ENCODE measurements at regions of chr14 and their contacts with region 1.

Region 1: DNA sequence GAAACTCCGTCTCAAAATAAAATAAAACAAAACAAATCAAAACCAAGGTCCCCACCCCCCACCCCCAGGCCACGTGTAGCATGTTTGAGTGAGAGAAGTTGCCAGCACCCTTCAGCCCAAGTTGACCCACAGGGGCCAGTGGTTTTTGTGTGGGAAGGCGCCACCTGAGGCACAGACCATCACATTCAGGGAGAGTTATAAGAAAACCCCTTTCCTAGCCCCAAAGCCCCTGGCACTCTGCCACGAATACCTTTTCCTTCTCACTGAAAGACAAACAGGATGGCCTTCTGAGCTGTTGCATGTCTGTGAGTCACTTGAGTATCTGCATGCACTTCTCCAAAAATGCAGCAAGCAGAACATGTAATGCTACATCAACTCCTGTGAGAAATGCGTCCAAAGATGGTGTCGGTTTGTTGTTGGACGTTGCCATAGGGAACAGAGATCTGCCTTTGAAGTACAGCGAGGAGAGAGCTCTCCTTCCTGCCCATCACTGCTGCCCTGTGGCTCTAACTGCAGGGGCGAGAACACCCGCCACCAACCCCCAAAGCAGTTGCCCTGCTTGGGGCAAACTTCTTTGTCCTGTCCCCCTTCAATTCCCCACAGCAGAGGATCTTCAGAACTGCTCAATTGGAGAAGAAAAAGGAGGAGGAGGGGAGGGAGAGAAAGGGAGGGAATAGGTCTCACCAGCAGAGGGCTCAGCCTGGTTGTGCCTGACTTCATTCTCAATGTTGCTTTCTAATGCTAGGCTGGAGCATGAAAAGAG is 2.7 kb upstream of the TRAF3 start:
- DNase-seq: no peak
- H3K4me3 ChIP-seq: no peak overlapping the region
- H3K27ac ChIP-seq: peak overlapping the region in 3 of 4 donors; percentile 46 to 82 (median 81)
- H3K4me1 ChIP-seq: peaks cover 0 to 31% (median 11%) of the 10 kb centered on the region in 4 donors
- H3K27me3 ChIP-seq: peaks cover 0 to 7% (median 0%) of the 10 kb centered on the region in 3 donors
- CTCF ChIP-seq: peak; percentile 44 to 78 (median 68)
- EP300 ChIP-seq: no peak
- POLR2A ChIP-seq: no peak

Region 2: DNA sequence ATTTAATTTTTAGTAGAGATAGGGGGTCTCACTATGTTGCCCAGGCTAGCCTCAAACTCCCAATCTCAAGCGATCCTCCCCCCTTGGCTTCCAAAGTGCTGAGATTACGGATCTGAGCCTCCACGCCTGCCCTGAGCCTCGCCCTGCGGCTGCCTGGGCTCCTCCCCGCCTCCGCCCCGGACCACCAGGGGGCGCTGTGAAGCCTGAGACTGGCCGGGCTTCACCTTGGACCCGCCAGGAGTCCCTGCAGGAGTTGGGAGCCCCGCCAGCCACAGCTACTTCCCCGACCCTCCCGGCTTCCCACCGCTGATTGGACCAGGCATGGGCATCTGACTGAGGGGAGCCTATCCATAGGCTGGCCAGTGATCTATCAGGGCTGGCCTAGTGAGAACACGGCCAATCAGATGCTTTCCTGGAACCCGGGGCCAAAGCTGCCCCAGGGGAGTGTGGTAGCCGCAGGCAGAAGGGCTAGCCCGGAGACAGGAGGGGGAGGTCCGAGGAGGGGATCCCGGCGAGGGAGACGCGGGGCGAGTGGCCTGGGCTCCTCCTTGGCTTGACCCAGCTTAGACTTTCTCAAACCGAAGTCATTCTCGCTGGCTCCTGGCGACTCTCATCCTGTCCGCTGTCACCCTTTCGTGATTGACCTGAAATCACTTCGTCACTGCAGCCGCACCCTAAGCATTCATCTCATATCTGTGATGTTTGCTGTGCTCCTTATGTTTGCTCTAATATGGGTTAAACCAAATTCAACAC is 249.9 kb before region 1 on chr14:
- intact Hi-C with region 1: loop called (anchors 5 kb)
- DNase-seq: peak; percentile 100
- H3K4me3 ChIP-seq: peak overlapping the region; percentile 47 to 73 (median 60)
- H3K27ac ChIP-seq: peak overlapping the region; percentile 80 to 89 (median 84)
- H3K4me1 ChIP-seq: peaks cover 0 to 15% (median 11%) of the 10 kb centered on the region in 4 donors
- H3K27me3 ChIP-seq: no peaks in the 10 kb centered on the region
- CTCF ChIP-seq: peak; percentile 95 to 99 (median 98)
- EP300 ChIP-seq: no peak
- POLR2A ChIP-seq: peak; percentile 7 to 52

Region 3: GRCh38 chr14:102694530-102695166 is 79.9 kb before region 1 on chr14:
- intact Hi-C with region 1: loop called (anchors 5 kb)
- DNase-seq: peak; percentile 79
- H3K4me3 ChIP-seq: no peak overlapping the region
- H3K27ac ChIP-seq: no peak overlapping the region
- H3K4me1 ChIP-seq: peaks cover 0 to 46% (median 22%) of the 10 kb centered on the region in 4 donors
- H3K27me3 ChIP-seq: no peaks in the 10 kb centered on the region
- CTCF ChIP-seq: peak; percentile 55 to 69 (median 60)
- EP300 ChIP-seq: no peak
- POLR2A ChIP-seq: no peak

Region 4: GRCh38 chr14:102849526-102850379 is 75.2 kb after region 1 on chr14:
- intact Hi-C with region 1: loop called (anchors 10 kb)
- DNase-seq: no peak
- H3K4me3 ChIP-seq: peak overlapping the region in 3 of 4 donors; percentile 16 to 27 (median 21)
- H3K27ac ChIP-seq: peak overlapping the region; percentile 51 to 73 (median 66)
- H3K4me1 ChIP-seq: peaks cover 0 to 18% (median 11%) of the 10 kb centered on the region in 4 donors
- H3K27me3 ChIP-seq: no peaks in the 10 kb centered on the region
- CTCF ChIP-seq: no peak
- EP300 ChIP-seq: no peak
- POLR2A ChIP-seq: no peak

Region 5: GRCh38 chr14:102868956-102869547 is 94.5 kb after region 1 on chr14:
- intact Hi-C with region 1: no loop called
- DNase-seq: no peak
- H3K4me3 ChIP-seq: no peak overlapping the region
- H3K27ac ChIP-seq: no peak overlapping the region
- H3K4me1 ChIP-seq: no peaks in the 10 kb centered on the region
- H3K27me3 ChIP-seq: no peaks in the 10 kb centered on the region
- CTCF ChIP-seq: no peak
- EP300 ChIP-seq: no peak
- POLR2A ChIP-seq: no peak

Region 6: GRCh38 chr14:102917469-102918211 is 143.1 kb after region 1 on chr14:
- intact Hi-C with region 1: loop called (anchors 5 kb)
- DNase-seq: no peak
- H3K4me3 ChIP-seq: no peak overlapping the region
- H3K27ac ChIP-seq: no peak overlapping the region
- H3K4me1 ChIP-seq: peaks cover 0 to 2% (median under 1%) of the 10 kb centered on the region in 4 donors
- H3K27me3 ChIP-seq: peaks cover under 1 to 6% (median 2%) of the 10 kb centered on the region in 3 donors
- CTCF ChIP-seq: peak; percentile 27 to 57 (median 34)
- EP300 ChIP-seq: no peak
- POLR2A ChIP-seq: no peak

Measured in sigmoid colon (tissue), 7 donors.